ENCODE measurements at regions of chr12 and their contacts with region 1.

Region 1: DNA sequence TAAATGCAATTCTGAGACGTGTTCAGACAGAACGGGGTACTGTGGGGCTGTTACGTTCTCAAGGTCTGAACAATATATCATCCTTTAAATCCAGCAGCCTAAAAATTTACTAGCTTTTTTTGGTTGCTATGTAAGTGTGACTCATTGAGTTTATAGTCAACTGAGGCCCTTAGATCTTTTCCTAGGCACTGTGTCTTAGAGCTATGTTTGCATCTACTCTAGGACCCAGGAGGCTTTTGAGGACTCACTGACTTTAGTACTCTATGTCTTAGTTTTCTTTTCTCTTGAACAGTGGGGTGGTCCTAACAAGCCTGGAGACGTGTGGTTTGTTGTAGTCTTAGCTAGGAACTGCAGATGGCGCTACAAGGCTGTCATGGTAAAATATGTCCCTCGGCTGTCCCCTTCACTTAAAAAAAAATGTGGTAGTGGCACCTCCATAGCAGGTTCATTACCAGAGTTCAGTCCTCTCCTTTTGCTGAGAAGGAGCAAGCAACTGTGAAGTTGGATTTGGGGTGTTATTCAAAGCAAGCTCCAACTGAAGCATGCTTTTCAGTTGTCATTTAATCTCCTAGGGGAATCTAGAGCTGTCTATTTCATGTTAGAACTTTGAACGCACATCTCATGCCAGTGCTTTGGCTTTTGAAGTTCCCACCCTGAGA is 8.7 kb upstream of the SPATS2 start:
- DNase-seq: peak; percentile 84
- ATAC-seq: peak; percentile 89
- H3K4me3 ChIP-seq: peak overlapping the region in 1 of 2 experiments; percentile 12; a peak in 1 of 4 replicates
- H3K27ac ChIP-seq: peak overlapping the region; percentile 38; the same call in 1 of the 2 replicates
- H3K4me1 ChIP-seq: peaks cover 30 to 35% of the 10 kb centered on the region in 2 experiments
- H3K27me3 ChIP-seq: no peaks in the 10 kb centered on the region
- CTCF ChIP-seq: peak; percentile 83 to 97 (median 92)
- POLR2A ChIP-seq: no peak
- RAD21 ChIP-seq: peak; percentile 98

Region 2: DNA sequence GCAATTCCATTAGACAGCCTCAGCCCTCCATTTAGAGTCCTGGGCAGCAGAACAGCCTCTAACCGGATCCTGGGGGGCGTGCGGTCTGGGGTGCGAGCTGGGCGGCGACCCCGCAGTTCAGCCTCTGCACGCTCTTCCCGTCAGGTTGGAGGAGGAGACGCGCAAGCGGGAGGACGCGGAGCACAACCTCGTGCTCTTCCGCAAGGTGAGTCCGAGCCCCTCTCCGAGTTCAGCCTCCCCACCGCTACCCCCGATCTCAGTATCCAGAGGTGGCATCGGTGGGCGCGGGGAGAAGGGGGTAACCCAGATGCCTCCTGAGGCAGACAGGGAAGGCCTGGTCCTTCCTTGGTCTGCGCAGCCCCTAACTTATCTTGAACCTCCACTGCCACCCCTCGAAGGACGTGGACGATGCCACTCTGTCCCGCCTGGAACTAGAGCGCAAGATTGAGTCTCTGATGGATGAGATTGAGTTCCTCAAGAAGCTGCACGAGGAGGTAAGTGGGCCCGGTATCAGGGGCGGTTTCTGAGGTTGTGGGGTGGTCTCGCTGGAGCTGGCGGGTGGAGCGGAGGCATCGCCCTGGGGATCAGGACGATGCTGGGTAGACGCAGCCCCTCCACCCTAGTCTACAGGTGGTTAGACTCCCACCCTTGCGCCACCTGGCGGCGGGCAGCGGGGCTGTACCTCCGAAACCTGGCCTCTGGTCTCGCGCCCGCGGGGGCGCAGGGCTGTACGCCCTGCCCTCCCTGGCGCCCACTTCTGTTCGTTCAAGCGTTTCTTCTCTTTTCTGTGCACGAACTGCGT is 62.4 kb before region 1 on chr12:
- CTCF ChIA-PET with region 1: interaction called, 23 read pairs
- POLR2A ChIA-PET with region 1: no interaction called
- RAD21 ChIA-PET with region 1: no interaction called
- intact Hi-C with region 1: no loop called
- DNase-seq: no peak
- ATAC-seq: peak; percentile 71
- H3K4me3 ChIP-seq: peak overlapping the region; percentile 47 to 48
- H3K27ac ChIP-seq: no peak overlapping the region; the same call in 1 of the 2 replicates
- H3K4me1 ChIP-seq: peaks cover 10 to 35% of the 10 kb centered on the region in 2 experiments; a peak in 3 of 4 replicates
- H3K27me3 ChIP-seq: no peaks in the 10 kb centered on the region
- CTCF ChIP-seq: peak; percentile 66 to 91 (median 90)
- POLR2A ChIP-seq: no peak
- RAD21 ChIP-seq: no peak

Region 3: GRCh38 chr12:49331380-49332222 is 27.0 kb before region 1 on chr12:
- CTCF ChIA-PET with region 1: interaction called, 80 read pairs
- POLR2A ChIA-PET with region 1: interaction called, 4 read pairs
- RAD21 ChIA-PET with region 1: interaction called, 5 to 9 read pairs
- intact Hi-C with region 1: loop called (anchors 1 kb)
- DNase-seq: peak; percentile 43
- ATAC-seq: peak; percentile 84
- H3K4me3 ChIP-seq: no peak overlapping the region
- H3K27ac ChIP-seq: peak overlapping the region; percentile 35
- H3K4me1 ChIP-seq: peaks cover 4 to 11% of the 10 kb centered on the region in 2 experiments; a peak in 2 of 4 replicates
- H3K27me3 ChIP-seq: no peaks in the 10 kb centered on the region
- CTCF ChIP-seq: peak; percentile 79 to 87 (median 86)
- POLR2A ChIP-seq: no peak
- RAD21 ChIP-seq: peak; percentile 86

Region 4: DNA sequence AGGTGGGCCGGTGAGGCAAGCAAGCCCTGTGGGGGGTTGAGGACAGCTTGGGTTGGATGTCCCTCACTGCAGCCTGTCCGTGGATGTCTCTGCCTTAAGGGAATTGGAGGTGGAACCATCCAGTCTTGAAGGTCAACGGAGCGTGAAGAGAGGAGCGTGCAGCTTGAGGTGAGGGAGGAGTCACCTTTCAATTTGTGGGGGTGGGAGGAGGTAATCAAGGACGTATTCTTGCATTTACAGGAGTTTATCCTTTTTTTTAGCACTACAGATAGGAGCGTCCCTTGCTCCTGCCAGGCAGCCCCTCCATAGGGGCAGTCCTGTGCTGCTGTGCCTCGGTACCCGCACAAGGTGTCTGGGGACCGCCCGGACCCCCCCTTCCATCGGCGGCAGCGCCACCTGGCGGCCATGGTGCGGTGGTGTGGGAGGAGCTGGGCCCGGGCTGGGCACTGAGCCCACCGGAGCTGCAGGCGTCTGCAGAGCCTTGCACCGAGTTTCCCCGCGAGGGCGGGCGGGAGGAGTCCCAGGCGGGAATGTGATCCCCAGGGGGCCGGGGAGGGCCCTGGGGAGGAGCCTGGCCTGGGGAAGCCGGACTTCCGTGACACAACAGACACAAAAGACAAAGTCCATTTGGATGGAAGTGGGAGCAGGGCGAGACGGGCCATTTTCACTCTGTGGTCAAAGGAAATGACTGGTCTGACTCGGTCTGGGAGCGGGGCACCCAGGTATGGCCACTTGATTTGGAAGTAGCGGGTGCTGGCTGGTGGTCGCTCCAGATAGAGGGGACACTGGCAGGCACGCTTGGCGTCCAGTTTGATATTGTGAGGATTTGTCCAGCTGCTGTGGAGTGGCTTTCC is 11.0 kb before region 1 on chr12:
- CTCF ChIA-PET with region 1: interaction called, 74 read pairs
- POLR2A ChIA-PET with region 1: interaction called, 16 read pairs
- RAD21 ChIA-PET with region 1: interaction called, 3 read pairs
- intact Hi-C with region 1: no loop called
- DNase-seq: peak; percentile 89
- ATAC-seq: peak; percentile 95
- H3K4me3 ChIP-seq: peak overlapping the region; percentile 73 to 80
- H3K27ac ChIP-seq: peak overlapping the region; percentile 80
- H3K4me1 ChIP-seq: peaks cover 37 to 46% of the 10 kb centered on the region in 2 experiments
- H3K27me3 ChIP-seq: no peaks in the 10 kb centered on the region
- CTCF ChIP-seq: peak in 2 of 3 experiments; percentile 88 to 96; a peak in 4 of 6 replicates
- POLR2A ChIP-seq: peak; percentile 57
- RAD21 ChIP-seq: no peak

Region 5: DNA sequence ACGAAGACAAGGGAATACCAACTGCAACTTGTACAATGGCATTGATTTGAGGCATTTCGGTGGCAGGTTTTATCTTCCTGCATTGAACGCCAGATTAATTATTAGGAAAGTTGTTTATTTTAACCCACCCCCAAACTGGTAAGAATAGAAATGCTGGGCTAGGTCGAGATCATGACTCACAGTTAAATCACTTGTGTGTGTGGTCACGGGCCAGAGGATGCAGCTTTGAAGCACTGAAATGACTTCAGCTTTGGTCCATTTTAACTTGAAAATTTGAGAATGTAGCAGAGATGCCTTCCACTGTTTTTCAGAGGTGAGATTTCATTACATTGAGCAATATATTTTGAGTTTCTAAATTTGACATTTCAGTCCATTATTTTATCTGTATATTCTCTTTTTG is 156.7 kb after region 1 on chr12:
- CTCF ChIA-PET with region 1: interaction called, 261 read pairs
- POLR2A ChIA-PET with region 1: interaction called, 23 read pairs
- RAD21 ChIA-PET with region 1: interaction called, 14 to 33 read pairs
- intact Hi-C with region 1: loop called (anchors 1 kb)
- DNase-seq: no peak
- ATAC-seq: peak; percentile 73
- H3K4me3 ChIP-seq: peak overlapping the region in 1 of 2 experiments; percentile 36; a peak in 2 of 4 replicates
- H3K27ac ChIP-seq: peak overlapping the region; percentile 95
- H3K4me1 ChIP-seq: peaks cover 84% of the 10 kb centered on the region in 2 experiments
- H3K27me3 ChIP-seq: no peaks in the 10 kb centered on the region
- CTCF ChIP-seq: no peak
- POLR2A ChIP-seq: no peak
- RAD21 ChIP-seq: peak; percentile 17; the same call in 1 of the 2 replicates

Region 6: DNA sequence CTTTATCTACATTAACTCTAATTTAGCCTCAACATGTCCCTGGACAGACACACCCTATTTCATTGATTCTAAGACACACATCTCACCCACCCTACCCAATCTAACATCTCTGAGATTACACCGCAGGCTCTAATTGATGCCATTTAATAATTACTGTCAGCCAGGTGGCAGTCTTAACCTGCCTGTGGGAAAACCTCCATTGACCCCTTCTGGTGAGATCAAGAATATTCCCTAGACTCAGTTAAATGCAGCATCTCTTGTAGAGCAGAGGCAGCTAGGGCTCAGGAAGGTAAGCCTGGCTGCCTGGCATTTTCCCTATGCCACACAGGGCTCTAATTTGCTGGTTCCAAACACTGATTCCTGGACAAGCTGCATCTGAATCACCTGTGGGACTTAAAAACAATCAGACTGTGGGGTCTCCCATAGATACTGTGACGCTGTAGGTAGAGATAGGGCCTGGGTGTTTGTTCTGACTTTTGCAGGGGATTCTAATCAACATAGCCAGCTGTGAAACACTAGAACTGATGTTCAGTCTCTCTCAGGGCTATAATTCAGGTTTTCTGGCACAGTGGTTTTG is 195.0 kb after region 1 on chr12:
- CTCF ChIA-PET with region 1: interaction called, 69 read pairs
- POLR2A ChIA-PET with region 1: interaction called, 14 read pairs
- RAD21 ChIA-PET with region 1: interaction called, 4 to 6 read pairs
- intact Hi-C with region 1: loop called (anchors 1 kb)
- DNase-seq: peak; percentile 45
- ATAC-seq: peak; percentile 75
- H3K4me3 ChIP-seq: no peak overlapping the region
- H3K27ac ChIP-seq: no peak overlapping the region
- H3K4me1 ChIP-seq: peaks cover 0 to 5% of the 10 kb centered on the region in 2 experiments; a peak in 2 of 4 replicates
- H3K27me3 ChIP-seq: no peaks in the 10 kb centered on the region
- CTCF ChIP-seq: peak; percentile 80 to 99 (median 81)
- POLR2A ChIP-seq: no peak
- RAD21 ChIP-seq: peak; percentile 94

Region 7: DNA sequence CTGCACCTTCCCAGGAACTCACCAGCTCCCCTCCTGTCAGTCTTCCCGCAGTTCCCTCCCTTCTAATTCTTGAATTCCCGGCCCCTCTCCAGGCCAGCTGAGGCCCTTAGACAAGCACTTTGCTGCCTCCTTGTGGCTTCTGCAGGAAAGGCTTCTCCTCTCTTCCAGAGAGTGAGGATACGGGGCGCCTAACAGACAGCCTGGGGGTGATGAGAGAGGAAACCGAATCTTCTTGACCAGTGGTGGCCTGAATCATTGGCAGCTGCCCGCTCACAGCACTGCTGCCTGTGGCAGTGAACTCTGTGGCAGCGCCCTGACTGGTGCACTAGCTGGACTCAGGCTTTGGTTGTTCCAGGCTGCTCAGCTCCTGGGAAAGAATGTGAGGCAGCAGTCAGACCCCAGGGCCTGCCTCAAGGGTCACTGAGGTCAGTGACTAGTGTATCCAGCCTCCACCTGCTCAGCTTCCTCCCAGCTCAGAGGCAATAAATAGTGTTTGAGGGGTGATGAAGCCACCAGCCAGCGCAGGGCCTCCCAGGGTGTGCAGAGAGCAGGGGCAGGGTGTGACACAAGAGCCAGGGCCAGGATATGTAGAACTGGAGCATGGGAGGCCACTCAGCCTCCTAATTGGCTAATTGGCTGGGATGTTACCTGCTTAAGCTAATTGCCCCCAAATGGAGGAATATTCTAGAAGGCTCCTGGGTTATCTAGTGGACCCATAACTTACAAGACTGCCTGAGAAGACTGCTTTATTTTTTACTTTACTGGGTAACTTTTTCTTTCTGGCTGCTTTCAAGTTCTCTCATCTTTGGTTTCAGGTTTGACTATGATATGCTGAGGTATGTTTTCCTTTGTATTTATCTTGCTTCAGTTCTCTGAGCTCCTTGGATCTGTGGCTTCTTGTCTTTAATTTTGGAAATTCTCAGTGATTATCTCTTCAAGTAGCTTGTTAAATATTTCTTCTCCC is 222.2 kb after region 1 on chr12:
- CTCF ChIA-PET with region 1: interaction called, 75 read pairs
- POLR2A ChIA-PET with region 1: interaction called, 6 read pairs
- RAD21 ChIA-PET with region 1: interaction called, 8 to 14 read pairs
- intact Hi-C with region 1: loop called (anchors 1 kb)
- DNase-seq: peak; percentile 71
- ATAC-seq: peak; percentile 97
- H3K4me3 ChIP-seq: no peak overlapping the region
- H3K27ac ChIP-seq: no peak overlapping the region; the same call in 1 of the 2 replicates
- H3K4me1 ChIP-seq: peaks cover 7 to 11% of the 10 kb centered on the region in 2 experiments; a peak in 3 of 4 replicates
- H3K27me3 ChIP-seq: no peaks in the 10 kb centered on the region
- CTCF ChIP-seq: peak; percentile 90 to 92 (median 91)
- POLR2A ChIP-seq: no peak
- RAD21 ChIP-seq: peak; percentile 96